Activated CD8-positive, alpha-beta T cell treated with anti-CD3 and anti-CD28 coated beads for 36 hours (primary cell): ENCODE measurements at regions of chr20 and their contacts with region 1.

Region 1: GRCh38 chr20:45373353-45374100 is 4.6 kb downstream of the TP53TG5 start:
- DNase-seq: peak; percentile 93
- ATAC-seq: peak; percentile 93
- H3K4me3 Mint-ChIP-seq: peak overlapping the region; percentile 77
- H3K27ac Mint-ChIP-seq: peak overlapping the region; percentile 83
- H3K4me1 Mint-ChIP-seq: peaks cover 29% of the 10 kb centered on the region
- H3K27me3 Mint-ChIP-seq: no peaks in the 10 kb centered on the region
- CTCF ChIP-seq: peak; percentile 96

Region 2: GRCh38 chr20:45087097-45087790 is 286.3 kb before region 1 on chr20:
- CTCF ChIA-PET with region 1: no interaction called
- POLR2A ChIA-PET with region 1: no interaction called
- intact Hi-C with region 1: no loop called
- DNase-seq: no peak
- ATAC-seq: no peak
- H3K4me3 Mint-ChIP-seq: no peak overlapping the region
- H3K27ac Mint-ChIP-seq: peak overlapping the region; percentile 30
- H3K4me1 Mint-ChIP-seq: peaks cover 2% of the 10 kb centered on the region
- H3K27me3 Mint-ChIP-seq: no peaks in the 10 kb centered on the region
- CTCF ChIP-seq: no peak

Region 3: DNA sequence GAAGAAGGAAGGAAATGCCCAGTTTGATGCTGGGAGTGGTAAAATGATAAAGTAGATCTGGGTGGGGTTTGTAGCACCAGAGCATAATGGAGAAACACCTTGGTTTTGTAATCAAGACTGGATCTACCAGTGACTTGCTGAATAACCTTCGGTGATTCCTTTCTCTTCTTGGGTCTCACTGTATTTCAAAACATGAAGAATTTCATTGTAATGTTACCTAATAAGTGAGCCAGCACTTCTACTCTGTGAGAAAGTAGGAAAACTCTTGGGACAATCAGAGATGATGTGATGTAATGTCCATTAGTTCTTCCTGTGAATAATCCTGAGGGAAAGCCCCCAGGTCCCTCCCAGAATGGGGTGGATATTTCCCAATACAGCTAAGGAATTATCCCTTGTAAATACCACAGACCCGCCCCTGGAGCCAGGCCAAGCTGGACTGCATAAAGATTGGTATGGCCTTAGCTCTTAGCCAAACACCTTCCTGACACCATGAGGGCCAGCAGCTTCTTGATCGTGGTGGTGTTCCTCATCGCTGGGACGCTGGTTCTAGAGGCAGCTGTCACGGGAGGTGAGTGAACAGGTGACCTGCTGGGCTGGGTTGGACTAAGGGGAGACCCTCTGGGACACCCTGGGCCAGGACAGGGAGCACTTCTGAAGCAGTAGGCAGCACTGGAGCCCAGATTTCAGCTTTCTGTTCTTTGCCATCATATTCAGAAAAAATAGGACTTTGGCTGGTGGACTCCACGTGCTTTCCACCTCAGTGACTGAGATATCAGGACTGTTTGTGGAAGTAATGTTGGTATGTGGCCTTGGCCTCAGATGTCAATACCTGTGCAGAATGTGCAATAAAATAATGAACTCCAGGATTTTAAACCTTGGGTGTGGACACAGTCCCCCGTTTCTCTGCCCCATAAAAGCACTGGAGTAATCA is 198.8 kb before region 1 on chr20 and contains the start of gene PI3:
- CTCF ChIA-PET with region 1: no interaction called
- POLR2A ChIA-PET with region 1: no interaction called
- intact Hi-C with region 1: no loop called
- DNase-seq: no peak
- ATAC-seq: no peak
- H3K4me3 Mint-ChIP-seq: no peak within 1 kb of the TSS
- H3K27ac Mint-ChIP-seq: no peak within 1 kb of the TSS
- H3K4me1 Mint-ChIP-seq: no peaks in the 10 kb centered on the region
- H3K27me3 Mint-ChIP-seq: peaks cover 3% of the 10 kb centered on the region
- CTCF ChIP-seq: no peak
- total RNA-seq, gene PI3: not detected

Region 4: DNA sequence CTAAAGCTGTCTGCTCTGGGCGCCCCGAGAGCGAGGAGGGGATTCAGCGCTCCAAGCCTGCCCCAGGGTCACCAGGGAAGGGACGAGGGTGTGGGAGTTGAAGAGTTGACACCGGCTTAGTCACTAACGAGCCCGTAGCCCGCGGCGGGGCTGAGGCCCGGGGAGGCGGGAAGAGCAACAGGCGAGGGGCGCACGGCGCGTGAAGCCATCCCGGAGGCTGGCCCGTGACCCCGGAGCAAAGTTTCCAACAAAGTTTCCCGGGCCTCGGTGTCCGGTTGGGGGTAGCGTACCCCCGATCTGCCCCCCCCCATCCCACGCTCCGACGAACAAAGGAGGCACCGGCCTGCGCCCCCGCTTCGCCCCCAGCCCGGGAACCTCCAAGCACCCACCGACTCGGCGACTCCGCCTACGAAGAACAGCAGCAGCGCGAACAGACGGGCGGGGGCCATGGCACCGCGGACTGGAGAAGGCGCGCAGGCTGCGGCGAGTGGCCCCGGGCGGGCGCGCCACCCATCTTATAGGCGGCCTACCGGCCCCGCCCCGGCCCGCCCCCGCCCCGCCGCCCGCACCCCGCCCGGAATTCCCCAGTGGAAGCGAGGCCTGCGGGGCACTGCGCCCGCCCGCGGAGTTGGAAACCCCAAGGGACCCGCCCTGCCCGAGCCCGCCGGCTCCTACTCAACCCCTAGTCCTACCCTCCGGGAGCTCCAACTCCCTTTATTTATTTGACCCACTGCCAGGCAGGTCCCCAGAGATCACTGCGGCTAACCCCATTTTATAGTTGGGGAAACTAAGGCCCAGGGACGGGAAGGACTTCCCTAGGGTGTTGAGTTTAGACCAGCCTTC is 25.4 kb before region 1 on chr20 and contains the start of gene SDC4:
- CTCF ChIA-PET with region 1: interaction called, 16 read pairs
- POLR2A ChIA-PET with region 1: interaction called, 4 read pairs
- intact Hi-C with region 1: no loop called
- DNase-seq: peak; percentile 68
- ATAC-seq: peak; percentile 80
- H3K4me3 Mint-ChIP-seq: peak within 1 kb of the TSS; percentile 79
- H3K27ac Mint-ChIP-seq: peak within 1 kb of the TSS; percentile 81
- H3K4me1 Mint-ChIP-seq: peaks cover 40% of the 10 kb centered on the region
- H3K27me3 Mint-ChIP-seq: peaks cover 2% of the 10 kb centered on the region
- CTCF ChIP-seq: no peak
- total RNA-seq, gene SDC4: 21.1 to 22.0 TPM

Region 5: GRCh38 chr20:45387274-45387673 is 13.7 kb after region 1 on chr20:
- CTCF ChIA-PET with region 1: interaction called, 32 read pairs
- POLR2A ChIA-PET with region 1: interaction called, 6 read pairs
- intact Hi-C with region 1: no loop called
- DNase-seq: no peak
- ATAC-seq: no peak
- H3K4me3 Mint-ChIP-seq: no peak overlapping the region
- H3K27ac Mint-ChIP-seq: no peak overlapping the region
- H3K4me1 Mint-ChIP-seq: peaks cover 23% of the 10 kb centered on the region
- H3K27me3 Mint-ChIP-seq: no peaks in the 10 kb centered on the region
- CTCF ChIP-seq: no peak

Region 6: DNA sequence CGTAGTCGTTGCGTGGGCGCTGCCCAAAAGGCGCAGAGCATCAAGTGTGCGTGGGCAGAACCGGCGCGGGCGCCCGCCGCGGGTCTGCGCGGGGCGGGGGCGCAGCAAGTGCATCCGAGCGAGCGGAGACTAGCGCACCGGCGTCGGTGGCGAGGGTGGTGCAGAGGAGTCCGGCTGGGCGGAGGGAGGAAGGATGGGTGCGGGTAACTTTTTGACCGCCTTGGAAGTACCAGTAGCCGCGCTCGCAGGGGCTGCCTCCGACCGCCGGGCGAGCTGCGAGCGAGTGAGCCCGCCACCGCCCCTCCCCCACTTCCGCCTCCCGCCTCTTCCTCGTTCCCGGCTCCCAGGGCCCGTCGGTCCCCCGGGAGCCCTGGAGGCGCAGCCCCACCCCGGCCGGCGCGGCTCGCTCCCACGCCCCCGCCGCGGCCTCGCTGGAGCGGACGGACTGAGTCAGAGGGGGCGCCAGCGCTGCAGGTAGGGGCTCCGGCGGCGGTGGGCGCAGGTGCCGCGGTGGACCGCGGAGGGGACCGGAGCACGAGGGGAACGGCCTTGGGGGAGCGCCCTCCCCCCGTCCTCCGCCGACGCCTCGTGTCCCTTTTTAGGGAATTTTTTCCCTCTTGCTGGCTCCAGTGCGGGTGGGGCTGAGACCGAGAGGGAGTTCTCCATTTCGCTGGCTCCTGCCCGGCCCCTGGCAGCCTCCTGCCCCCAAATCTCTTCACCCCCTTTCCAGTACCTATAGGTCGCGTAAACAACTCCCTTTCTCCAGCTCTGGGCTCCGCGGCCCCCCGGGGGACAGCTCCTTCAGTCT is 32.9 kb after region 1 on chr20:
- CTCF ChIA-PET with region 1: interaction called, 26 read pairs
- POLR2A ChIA-PET with region 1: interaction called, 8 read pairs
- intact Hi-C with region 1: no loop called
- DNase-seq: peak; percentile 53
- ATAC-seq: peak; percentile 52
- H3K4me3 Mint-ChIP-seq: peak overlapping the region; percentile 73
- H3K27ac Mint-ChIP-seq: peak overlapping the region; percentile 63
- H3K4me1 Mint-ChIP-seq: peaks cover 21% of the 10 kb centered on the region
- H3K27me3 Mint-ChIP-seq: peaks cover 4% of the 10 kb centered on the region
- CTCF ChIP-seq: no peak

Region 7: DNA sequence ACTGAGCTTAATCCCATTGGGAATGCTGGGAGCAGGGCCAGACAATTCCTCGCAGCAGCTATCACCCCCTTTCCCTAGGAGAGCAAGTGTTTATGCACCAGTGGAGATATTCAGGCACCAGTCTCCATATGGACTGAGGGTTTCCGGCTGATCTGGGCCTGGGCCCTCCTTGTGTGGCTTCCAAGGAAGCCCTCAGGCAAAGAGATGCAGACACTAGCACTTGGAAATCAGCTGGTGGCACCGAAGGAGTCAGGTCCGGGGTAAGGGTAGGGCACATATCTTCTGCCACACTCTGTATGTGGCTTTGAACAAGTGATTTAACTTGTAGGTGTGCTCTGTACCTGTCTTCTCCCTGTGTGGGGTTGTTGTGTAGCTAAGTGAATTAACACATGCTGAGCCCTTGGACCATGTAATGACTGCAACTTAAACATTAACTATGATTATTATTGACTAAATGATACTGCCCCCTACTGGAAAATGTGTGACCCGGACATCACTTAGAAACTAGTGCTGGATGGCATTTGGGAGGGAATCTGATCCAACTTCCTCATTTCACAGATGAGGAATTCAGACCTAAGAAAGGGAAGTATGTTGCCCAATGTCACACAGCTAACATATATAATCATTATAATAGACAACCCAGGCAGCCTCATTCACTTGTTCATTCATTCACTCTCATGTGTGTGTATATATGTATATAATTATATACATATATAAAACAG is 76.7 kb after region 1 on chr20:
- CTCF ChIA-PET with region 1: interaction called, 163 read pairs
- POLR2A ChIA-PET with region 1: interaction called, 3 read pairs
- intact Hi-C with region 1: loop called (anchors 2 kb)
- DNase-seq: peak; percentile 28
- ATAC-seq: peak; percentile 66
- H3K4me3 Mint-ChIP-seq: no peak overlapping the region
- H3K27ac Mint-ChIP-seq: no peak overlapping the region
- H3K4me1 Mint-ChIP-seq: peaks cover 2% of the 10 kb centered on the region
- H3K27me3 Mint-ChIP-seq: peaks cover 2% of the 10 kb centered on the region
- CTCF ChIP-seq: peak; percentile 79